Pancreas (tissue), 10 donors: ENCODE measurements at regions of chr12 and their contacts with region 1.

Region 1: GRCh38 chr12:32918890-32919801 is 22.6 kb upstream of the PKP2 start:
- DNase-seq: no peak
- ATAC-seq: peak; percentile 61 to 84 (median 78)
- H3K4me3 ChIP-seq: no peak overlapping the region
- H3K27ac ChIP-seq: no peak overlapping the region
- H3K4me1 ChIP-seq: no peaks in the 10 kb centered on the region
- H3K27me3 ChIP-seq: no peaks in the 10 kb centered on the region
- CTCF ChIP-seq: peak in 3 of 4 donors; percentile 26 to 49 (median 40)

Region 2: DNA sequence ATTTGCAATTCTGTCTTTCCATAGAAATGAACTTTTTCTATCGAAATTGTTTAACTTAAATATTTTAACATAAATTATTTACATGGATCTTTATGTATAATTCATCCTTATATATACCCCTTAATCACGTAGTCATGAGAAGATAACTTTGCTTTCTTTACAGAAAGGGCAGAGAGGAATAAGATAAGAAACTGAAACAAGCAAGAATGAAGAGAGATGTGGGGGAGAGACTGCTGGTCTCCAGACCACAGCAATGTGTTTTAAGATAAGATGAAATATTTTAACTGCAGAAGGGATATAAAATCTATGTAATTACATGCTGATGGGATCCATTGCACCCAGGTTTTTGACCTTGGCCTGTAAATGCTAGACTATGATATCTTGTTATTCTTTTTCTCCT is 274.7 kb before region 1 on chr12:
- intact Hi-C with region 1: no loop called
- DNase-seq: no peak
- ATAC-seq: no peak
- H3K4me3 ChIP-seq: no peak overlapping the region
- H3K27ac ChIP-seq: no peak overlapping the region
- H3K4me1 ChIP-seq: no peaks in the 10 kb centered on the region
- H3K27me3 ChIP-seq: no peaks in the 10 kb centered on the region
- CTCF ChIP-seq: no peak

Region 3: GRCh38 chr12:32755654-32756475 is 163.3 kb before region 1 on chr12 and contains the start of gene YARS2:
- intact Hi-C with region 1: loop called in 2 of 3 experiments (anchors 5 to 10 kb)
- DNase-seq: peak; percentile 88 to 97 (median 94)
- ATAC-seq: peak; percentile 98 to 99 (median 99)
- H3K4me3 ChIP-seq: peak within 1 kb of the TSS; percentile 71 to 100 (median 82)
- H3K27ac ChIP-seq: peak within 1 kb of the TSS; percentile 50 to 87 (median 75)
- H3K4me1 ChIP-seq: peaks cover 0 to 13% (median 0%) of the 10 kb centered on the region in 3 donors
- H3K27me3 ChIP-seq: no peaks in the 10 kb centered on the region
- CTCF ChIP-seq: peak; percentile 37 to 68 (median 48)
- total RNA-seq, gene YARS2: 3.7 to 7.9 (median 6.0) TPM

Region 4: GRCh38 chr12:32761716-32762115 is 157.4 kb before region 1 on chr12:
- intact Hi-C with region 1: loop called in 2 of 3 experiments (anchors 5 to 10 kb)
- DNase-seq: no peak
- ATAC-seq: no peak
- H3K4me3 ChIP-seq: no peak overlapping the region
- H3K27ac ChIP-seq: no peak overlapping the region
- H3K4me1 ChIP-seq: no peaks in the 10 kb centered on the region
- H3K27me3 ChIP-seq: no peaks in the 10 kb centered on the region
- CTCF ChIP-seq: no peak

Region 5: DNA sequence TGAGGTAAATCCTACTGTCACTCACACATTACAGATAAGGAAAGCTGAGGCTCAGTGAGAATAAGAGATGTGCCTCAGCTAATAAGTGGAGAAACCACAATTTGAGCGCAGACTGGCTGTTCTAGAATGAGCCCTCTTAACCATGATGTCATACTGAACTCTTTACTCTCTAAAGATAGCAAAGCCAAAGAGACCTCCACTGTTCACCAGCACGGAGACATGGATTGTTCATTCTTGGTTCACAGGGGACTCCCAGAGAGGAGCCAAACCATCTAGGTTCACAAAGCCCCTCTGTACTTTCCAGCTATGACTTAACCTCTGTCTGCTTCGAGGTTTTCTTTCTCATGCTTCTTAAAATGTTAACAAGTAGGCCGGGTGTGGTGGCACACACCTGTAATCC is 130.7 kb before region 1 on chr12:
- intact Hi-C with region 1: no loop called
- DNase-seq: no peak
- ATAC-seq: no peak
- H3K4me3 ChIP-seq: no peak overlapping the region
- H3K27ac ChIP-seq: no peak overlapping the region
- H3K4me1 ChIP-seq: no peaks in the 10 kb centered on the region
- H3K27me3 ChIP-seq: no peaks in the 10 kb centered on the region
- CTCF ChIP-seq: no peak